CD4-positive, alpha-beta memory T cell (primary cell): ENCODE measurements at regions of chr4 and their contacts with region 1.

Region 1: DNA sequence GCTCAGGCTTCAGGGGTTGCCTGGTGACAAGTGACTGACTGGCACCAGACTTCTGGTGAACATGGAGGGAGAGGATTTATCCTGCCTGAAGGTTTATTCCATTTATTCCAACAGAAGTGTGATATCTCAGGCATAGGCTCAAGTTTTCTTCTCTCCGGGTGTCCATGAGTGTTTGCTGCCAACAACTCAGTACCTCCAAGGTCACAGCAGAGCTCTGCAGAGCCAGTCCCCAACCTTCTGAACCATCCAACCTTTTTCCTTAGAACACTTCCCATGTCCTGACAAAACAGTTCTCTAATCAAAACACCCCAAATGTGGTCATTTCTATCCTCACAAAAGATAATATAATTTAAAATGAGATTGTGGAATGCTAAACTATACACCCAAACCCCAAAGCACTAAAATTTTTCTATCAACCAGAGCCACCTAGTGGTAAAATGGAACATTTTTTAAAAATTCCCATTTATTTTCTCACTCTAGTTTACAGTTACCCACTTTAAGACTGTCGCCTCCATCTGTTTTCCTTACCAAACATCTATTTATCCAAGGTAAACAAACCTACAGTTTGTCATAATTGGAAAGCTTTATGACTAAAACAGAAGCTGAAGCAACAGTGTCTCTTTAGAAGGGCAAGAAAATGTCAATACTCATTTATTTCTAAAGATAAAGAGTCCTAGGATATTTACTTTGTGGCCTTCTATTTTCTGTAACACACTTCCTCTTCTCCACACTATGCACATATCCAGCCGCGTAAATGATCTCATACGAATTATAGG is 39.6 kb downstream of the TMEM154 start:
- DNase-seq: peak in 4 of 5 donors; percentile 25 to 52 (median 34)
- H3K4me3 ChIP-seq: no peak overlapping the region
- H3K4me3 Mint-ChIP-seq: no peak overlapping the region
- H3K27ac ChIP-seq: no peak overlapping the region
- H3K27ac Mint-ChIP-seq: peak overlapping the region in 3 of 7 donors; percentile 18 to 64 (median 43)
- H3K4me1 ChIP-seq: peaks cover 23% of the 10 kb centered on the region
- H3K4me1 Mint-ChIP-seq: peaks cover 24 to 27% (median 27%) of the 10 kb centered on the region in 4 donors
- H3K27me3 ChIP-seq: no peaks in the 10 kb centered on the region
- H3K27me3 Mint-ChIP-seq: no peaks in the 10 kb centered on the region

Region 2: DNA sequence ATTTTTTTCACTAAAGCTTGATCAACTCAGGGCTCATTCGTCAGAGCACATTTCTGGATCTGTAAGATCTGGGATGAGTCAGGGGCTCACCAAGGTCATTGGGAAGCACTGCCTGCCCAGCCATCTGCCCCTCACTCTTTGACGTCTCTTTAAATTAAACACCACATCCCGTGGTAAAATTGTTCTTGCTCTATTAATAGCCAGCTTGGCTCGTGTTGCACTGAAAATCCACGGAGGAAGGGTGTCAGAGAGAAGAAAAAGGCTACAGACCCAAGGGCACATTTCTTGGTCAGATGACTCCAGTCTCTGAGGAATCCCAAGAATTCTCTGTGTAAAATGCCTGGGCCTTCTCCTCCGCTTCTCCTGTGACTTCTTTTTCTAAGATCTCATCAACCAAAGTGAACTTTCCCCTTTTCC is 833.7 kb before region 1 on chr4:
- CTCF ChIA-PET with region 1: no interaction called
- POLR2A ChIA-PET with region 1: no interaction called
- intact Hi-C with region 1: no loop called
- DNase-seq: no peak
- H3K4me3 ChIP-seq: no peak overlapping the region
- H3K4me3 Mint-ChIP-seq: no peak overlapping the region
- H3K27ac ChIP-seq: no peak overlapping the region
- H3K27ac Mint-ChIP-seq: no peak overlapping the region
- H3K4me1 ChIP-seq: no peaks in the 10 kb centered on the region
- H3K4me1 Mint-ChIP-seq: peaks cover 0 to 2% (median 0%) of the 10 kb centered on the region in 4 donors
- H3K27me3 ChIP-seq: no peaks in the 10 kb centered on the region
- H3K27me3 Mint-ChIP-seq: peaks cover 0 to 1% of the 10 kb centered on the region in 2 donors

Region 3: DNA sequence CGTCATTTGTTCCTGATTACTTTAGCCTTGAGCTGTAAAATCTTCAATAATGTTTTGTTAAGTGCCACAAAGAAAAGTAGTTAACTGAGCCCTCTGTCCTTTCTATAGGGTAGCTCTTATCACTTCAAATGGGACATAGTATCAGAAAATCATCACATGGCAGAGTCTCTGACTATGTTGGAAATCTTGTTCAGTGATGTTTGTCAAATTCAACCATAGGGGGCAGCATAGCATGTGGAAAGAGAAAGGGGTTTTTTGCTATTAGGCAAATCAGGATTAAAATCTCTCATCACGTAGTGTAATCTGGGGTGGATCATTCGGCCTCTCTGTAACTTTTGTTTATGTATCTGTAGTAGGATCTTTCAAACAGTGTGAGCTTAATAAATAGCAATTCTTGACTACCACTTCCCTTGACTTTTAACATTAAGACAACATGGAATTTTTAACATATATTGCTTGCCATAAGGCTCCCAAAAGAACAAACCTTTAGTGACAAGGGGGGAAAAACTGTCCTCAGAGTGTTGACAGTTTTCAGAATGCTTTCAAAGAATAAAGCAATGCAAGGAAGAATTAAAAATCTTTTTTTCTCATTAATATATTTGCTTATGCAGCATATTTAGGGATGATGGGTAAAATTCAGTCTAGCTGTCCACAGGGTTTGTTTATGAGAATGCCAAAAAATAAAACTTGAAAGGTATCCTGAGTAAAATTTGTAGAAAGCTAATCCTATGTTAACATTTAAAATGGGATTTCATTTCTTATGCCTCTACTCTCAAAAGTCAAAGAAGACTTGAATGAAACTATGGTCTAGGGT is 231.5 kb before region 1 on chr4:
- CTCF ChIA-PET with region 1: interaction called, 13 read pairs
- POLR2A ChIA-PET with region 1: no interaction called
- intact Hi-C with region 1: loop called (anchors 1 kb)
- DNase-seq: peak; percentile 28 to 44 (median 41)
- H3K4me3 ChIP-seq: no peak overlapping the region
- H3K4me3 Mint-ChIP-seq: no peak overlapping the region
- H3K27ac ChIP-seq: no peak overlapping the region
- H3K27ac Mint-ChIP-seq: peak overlapping the region in 5 of 7 donors; percentile 3 to 85 (median 23)
- H3K4me1 ChIP-seq: no peaks in the 10 kb centered on the region
- H3K4me1 Mint-ChIP-seq: peaks cover 18 to 23% (median 20%) of the 10 kb centered on the region in 4 donors
- H3K27me3 ChIP-seq: no peaks in the 10 kb centered on the region
- H3K27me3 Mint-ChIP-seq: no peaks in the 10 kb centered on the region

Region 4: GRCh38 chr4:152454398-152455011 is 185.7 kb before region 1 on chr4:
- CTCF ChIA-PET with region 1: interaction called, 3 read pairs
- POLR2A ChIA-PET with region 1: no interaction called
- intact Hi-C with region 1: loop called (anchors 1 kb)
- DNase-seq: peak in 3 of 5 donors; percentile 12
- H3K4me3 ChIP-seq: no peak overlapping the region
- H3K4me3 Mint-ChIP-seq: no peak overlapping the region
- H3K27ac ChIP-seq: no peak overlapping the region
- H3K27ac Mint-ChIP-seq: peak overlapping the region in 2 of 7 donors; percentile 31 to 73
- H3K4me1 ChIP-seq: peaks cover 23% of the 10 kb centered on the region
- H3K4me1 Mint-ChIP-seq: peaks cover 28 to 42% (median 36%) of the 10 kb centered on the region in 4 donors
- H3K27me3 ChIP-seq: no peaks in the 10 kb centered on the region
- H3K27me3 Mint-ChIP-seq: no peaks in the 10 kb centered on the region

Region 5: DNA sequence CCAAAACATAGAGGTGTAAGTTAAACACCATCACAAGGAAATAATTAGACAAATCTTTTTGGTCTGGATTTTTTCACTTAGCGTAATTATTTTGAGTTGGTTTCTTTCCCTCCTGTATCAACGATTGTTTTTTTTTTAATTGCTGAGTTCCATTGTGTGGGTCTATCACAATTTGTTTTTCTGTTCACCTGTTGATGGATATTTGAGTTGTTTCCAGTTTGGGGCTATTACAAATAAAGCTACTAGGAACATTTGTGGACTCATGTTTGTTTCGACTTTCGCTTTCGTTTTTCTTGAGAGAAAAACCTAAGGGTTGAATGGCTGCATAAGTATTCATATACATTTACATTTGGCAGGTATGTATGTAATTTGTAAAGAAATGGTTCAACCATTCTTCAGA is 84.0 kb before region 1 on chr4:
- CTCF ChIA-PET with region 1: interaction called, 11 read pairs
- POLR2A ChIA-PET with region 1: interaction called, 3 read pairs
- intact Hi-C with region 1: no loop called
- DNase-seq: peak in 2 of 5 donors; percentile 17 to 22
- H3K4me3 ChIP-seq: peak overlapping the region; percentile 9 to 22
- H3K4me3 Mint-ChIP-seq: peak overlapping the region; percentile 79 to 89 (median 86)
- H3K27ac ChIP-seq: peak overlapping the region; percentile 14
- H3K27ac Mint-ChIP-seq: peak overlapping the region; percentile 55 to 95 (median 94)
- H3K4me1 ChIP-seq: peaks cover 50% of the 10 kb centered on the region
- H3K4me1 Mint-ChIP-seq: peaks cover 29 to 57% (median 42%) of the 10 kb centered on the region in 4 donors
- H3K27me3 ChIP-seq: no peaks in the 10 kb centered on the region
- H3K27me3 Mint-ChIP-seq: no peaks in the 10 kb centered on the region

Region 6: GRCh38 chr4:152679414-152680281 is 39.4 kb after region 1 on chr4 and contains the start of gene TMEM154:
- CTCF ChIA-PET with region 1: interaction called, 21 read pairs
- POLR2A ChIA-PET with region 1: interaction called, 7 read pairs
- intact Hi-C with region 1: no loop called
- DNase-seq: peak; percentile 78 to 82 (median 81)
- H3K4me3 ChIP-seq: peak within 1 kb of the TSS; percentile 30 to 62
- H3K4me3 Mint-ChIP-seq: peak within 1 kb of the TSS; percentile 91 to 97 (median 96)
- H3K27ac ChIP-seq: peak within 1 kb of the TSS; percentile 69
- H3K27ac Mint-ChIP-seq: peak within 1 kb of the TSS; percentile 90 to 98 (median 96)
- H3K4me1 ChIP-seq: peaks cover 47% of the 10 kb centered on the region
- H3K4me1 Mint-ChIP-seq: peaks cover 36 to 55% (median 47%) of the 10 kb centered on the region in 4 donors
- H3K27me3 ChIP-seq: no peaks in the 10 kb centered on the region
- H3K27me3 Mint-ChIP-seq: no peaks in the 10 kb centered on the region
- total RNA-seq, gene TMEM154: 35.2 to 38.6 TPM

Region 7: GRCh38 chr4:152735396-152735859 is 95.2 kb after region 1 on chr4:
- CTCF ChIA-PET with region 1: interaction called, 8 read pairs
- POLR2A ChIA-PET with region 1: no interaction called
- intact Hi-C with region 1: loop called (anchors 1 kb)
- DNase-seq: peak in 4 of 5 donors; percentile 36 to 39 (median 38)
- H3K4me3 ChIP-seq: no peak overlapping the region
- H3K4me3 Mint-ChIP-seq: no peak overlapping the region
- H3K27ac ChIP-seq: no peak overlapping the region
- H3K27ac Mint-ChIP-seq: peak overlapping the region in 1 of 7 donors; percentile 0
- H3K4me1 ChIP-seq: no peaks in the 10 kb centered on the region
- H3K4me1 Mint-ChIP-seq: peaks cover 0 to 3% (median 0%) of the 10 kb centered on the region in 4 donors
- H3K27me3 ChIP-seq: no peaks in the 10 kb centered on the region
- H3K27me3 Mint-ChIP-seq: peaks cover 2 to 3% of the 10 kb centered on the region in 2 donors